Left ventricle myocardium inferior (tissue), 1 donor: ENCODE measurements at regions of chr19 and their contacts with region 1.

Region 1: GRCh38 chr19:16771618-16772017 is 52.0 kb downstream of the NWD1 start:
- DNase-seq: peak; percentile 59
- H3K4me3 ChIP-seq: no peak overlapping the region
- H3K27ac ChIP-seq: no peak overlapping the region
- H3K4me1 ChIP-seq: no peaks in the 10 kb centered on the region
- H3K27me3 ChIP-seq: no peaks in the 10 kb centered on the region
- CTCF ChIP-seq: peak; percentile 91

Region 2: GRCh38 chr19:17052439-17053210 is 281.0 kb after region 1 on chr19:
- intact Hi-C with region 1: loop called (anchors 5 kb)
- DNase-seq: no peak
- H3K4me3 ChIP-seq: no peak overlapping the region
- H3K27ac ChIP-seq: no peak overlapping the region
- H3K4me1 ChIP-seq: no peaks in the 10 kb centered on the region
- H3K27me3 ChIP-seq: no peaks in the 10 kb centered on the region
- CTCF ChIP-seq: peak; percentile 79